SK-N-SH (cell line): ENCODE measurements at regions of chr1 and their contacts with region 1.

Region 1: GRCh38 chr1:231182317-231182716 is 20.5 kb downstream of the TRIM67 start:
- DNase-seq: no peak
- H3K4me3 ChIP-seq: no peak overlapping the region
- H3K27ac ChIP-seq: no peak overlapping the region
- H3K4me1 ChIP-seq: no peaks in the 10 kb centered on the region
- H3K27me3 ChIP-seq: no peaks in the 10 kb centered on the region; the same call in 1 of the 2 replicates
- CTCF ChIP-seq: no peak
- EP300 ChIP-seq: no peak
- RAD21 ChIP-seq: no peak

Region 2: DNA sequence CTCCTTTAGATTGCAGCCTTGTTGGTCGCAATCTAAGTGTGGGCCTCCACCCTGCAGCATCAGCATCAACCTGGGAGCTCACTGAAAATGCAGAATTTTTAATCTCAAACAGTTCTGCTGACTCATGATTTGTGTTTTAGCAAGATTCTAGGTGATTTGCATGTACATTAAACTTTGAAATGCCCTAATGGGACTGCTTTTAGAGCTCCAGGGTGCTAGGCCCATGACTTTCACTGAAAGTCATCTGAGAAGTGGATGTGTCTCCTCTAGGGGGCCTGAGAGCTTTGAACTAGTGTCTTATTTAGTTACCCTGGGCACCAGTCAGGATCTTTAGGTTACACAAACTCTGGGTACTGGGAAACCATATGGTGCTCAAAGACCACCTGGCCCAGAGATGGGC is 11.4 kb before region 1 on chr1:
- CTCF ChIA-PET with region 1: interaction called, 12 read pairs
- POLR2A ChIA-PET with region 1: no interaction called
- DNase-seq: no peak
- H3K4me3 ChIP-seq: no peak overlapping the region
- H3K27ac ChIP-seq: no peak overlapping the region
- H3K4me1 ChIP-seq: no peaks in the 10 kb centered on the region; a peak in 1 of 4 replicates
- H3K27me3 ChIP-seq: peaks cover 8% of the 10 kb centered on the region; the same call in 1 of the 2 replicates
- CTCF ChIP-seq: 0 out of 2 replicates have a peak, but pooled peaks have one; percentile 13
- EP300 ChIP-seq: no peak
- RAD21 ChIP-seq: no peak

Region 3: GRCh38 chr1:231200388-231201031 is 18.2 kb after region 1 on chr1:
- CTCF ChIA-PET with region 1: no interaction called
- POLR2A ChIA-PET with region 1: no interaction called
- DNase-seq: peak; percentile 75
- H3K4me3 ChIP-seq: no peak overlapping the region
- H3K27ac ChIP-seq: no peak overlapping the region
- H3K4me1 ChIP-seq: peaks cover 0 to 16% of the 10 kb centered on the region in 2 experiments; a peak in 1 of 4 replicates
- H3K27me3 ChIP-seq: no peaks in the 10 kb centered on the region; the same call in 1 of the 2 replicates
- CTCF ChIP-seq: no peak
- EP300 ChIP-seq: peak in 1 of 2 experiments; percentile 77; a peak in 1 of 4 replicates
- RAD21 ChIP-seq: no peak

Region 4: DNA sequence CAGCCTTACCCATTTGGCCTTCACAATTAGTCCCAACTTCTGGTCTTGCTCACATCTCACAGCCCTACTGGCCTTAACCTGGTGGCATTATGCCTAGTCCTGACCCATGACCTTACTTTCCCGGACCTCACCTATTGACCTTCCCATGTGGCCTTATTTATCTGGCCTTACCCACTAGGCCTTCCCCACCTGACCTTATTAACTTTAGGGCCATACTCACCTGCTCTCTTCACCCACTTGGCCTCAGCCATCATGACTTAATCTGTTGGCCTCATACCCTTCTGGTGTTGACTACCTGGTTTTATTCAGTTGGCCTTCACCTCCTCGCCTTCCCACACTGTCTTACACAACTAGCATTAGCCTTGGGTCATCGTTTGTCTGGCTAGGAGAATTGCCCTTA is 119.7 kb after region 1 on chr1:
- CTCF ChIA-PET with region 1: no interaction called
- POLR2A ChIA-PET with region 1: no interaction called
- DNase-seq: no peak
- H3K4me3 ChIP-seq: no peak overlapping the region
- H3K27ac ChIP-seq: no peak overlapping the region
- H3K4me1 ChIP-seq: no peaks in the 10 kb centered on the region
- H3K27me3 ChIP-seq: no peaks in the 10 kb centered on the region
- CTCF ChIP-seq: no peak
- EP300 ChIP-seq: no peak
- RAD21 ChIP-seq: no peak